CD8-positive, alpha-beta T cell (primary cell): ENCODE measurements at regions of chr3 and their contacts with region 1.

Region 1: DNA sequence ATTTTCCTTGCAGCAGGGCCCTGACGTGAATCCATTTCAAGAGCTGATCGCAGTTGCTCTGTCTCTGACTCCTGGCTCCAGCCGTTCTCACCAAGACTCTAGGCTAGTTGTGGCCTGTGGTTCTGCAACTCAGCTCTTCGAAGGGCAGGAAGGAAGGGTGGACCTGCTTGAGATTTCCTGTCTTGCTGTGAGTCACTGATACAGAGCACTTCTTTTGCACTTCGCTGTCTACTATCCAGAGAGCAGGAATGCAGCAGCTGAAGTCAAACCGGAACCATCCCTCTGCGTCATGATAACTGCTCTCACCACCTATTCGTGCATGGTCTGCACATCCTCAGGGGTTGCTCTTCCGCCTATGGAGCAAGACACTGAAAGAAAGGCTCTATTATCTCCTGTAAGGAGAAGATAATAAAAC is 59.7 kb downstream of the RAP2B start:
- DNase-seq: peak; percentile 62 to 96 (median 81)
- ATAC-seq: peak; percentile 93
- H3K4me3 ChIP-seq: peak overlapping the region; percentile 3 to 10
- H3K4me3 Mint-ChIP-seq: peak overlapping the region; percentile 67
- H3K27ac ChIP-seq: peak overlapping the region; percentile 64 to 96
- H3K27ac Mint-ChIP-seq: peak overlapping the region; percentile 94
- H3K4me1 ChIP-seq: peaks cover 68% of the 10 kb centered on the region
- H3K4me1 Mint-ChIP-seq: peaks cover 68% of the 10 kb centered on the region
- H3K27me3 ChIP-seq: no peaks in the 10 kb centered on the region
- H3K27me3 Mint-ChIP-seq: no peaks in the 10 kb centered on the region
- CTCF ChIP-seq: no peak

Region 2: GRCh38 chr3:153209596-153209995 is 12.2 kb before region 1 on chr3:
- CTCF ChIA-PET with region 1: interaction called, 17 read pairs
- POLR2A ChIA-PET with region 1: interaction called, 14 read pairs
- intact Hi-C with region 1: loop called in 1 of 2 experiments (anchors 1 kb)
- DNase-seq: peak in 1 of 9 experiments; percentile 43
- ATAC-seq: no peak
- H3K4me3 ChIP-seq: no peak overlapping the region
- H3K4me3 Mint-ChIP-seq: peak overlapping the region; percentile 50
- H3K27ac ChIP-seq: no peak overlapping the region
- H3K27ac Mint-ChIP-seq: no peak overlapping the region
- H3K4me1 ChIP-seq: peaks cover 13% of the 10 kb centered on the region
- H3K4me1 Mint-ChIP-seq: peaks cover 36% of the 10 kb centered on the region
- H3K27me3 ChIP-seq: no peaks in the 10 kb centered on the region
- H3K27me3 Mint-ChIP-seq: no peaks in the 10 kb centered on the region
- CTCF ChIP-seq: no peak

Region 3: GRCh38 chr3:153252963-153253362 is 31.2 kb after region 1 on chr3:
- CTCF ChIA-PET with region 1: no interaction called
- POLR2A ChIA-PET with region 1: interaction called, 3 read pairs
- intact Hi-C with region 1: loop called in 1 of 2 experiments (anchors 5 kb)
- DNase-seq: no peak
- ATAC-seq: no peak
- H3K4me3 ChIP-seq: no peak overlapping the region
- H3K4me3 Mint-ChIP-seq: no peak overlapping the region
- H3K27ac ChIP-seq: no peak overlapping the region
- H3K27ac Mint-ChIP-seq: no peak overlapping the region
- H3K4me1 ChIP-seq: peaks cover 10% of the 10 kb centered on the region
- H3K4me1 Mint-ChIP-seq: peaks cover 34% of the 10 kb centered on the region
- H3K27me3 ChIP-seq: no peaks in the 10 kb centered on the region
- H3K27me3 Mint-ChIP-seq: no peaks in the 10 kb centered on the region
- CTCF ChIP-seq: no peak

Region 4: GRCh38 chr3:153291056-153291685 is 69.4 kb after region 1 on chr3:
- CTCF ChIA-PET with region 1: interaction called, 15 read pairs
- POLR2A ChIA-PET with region 1: interaction called, 3 read pairs
- intact Hi-C with region 1: loop called in 1 of 2 experiments (anchors 2 kb)
- DNase-seq: peak in 2 of 9 experiments; percentile 44 to 57
- ATAC-seq: no peak
- H3K4me3 ChIP-seq: no peak overlapping the region
- H3K4me3 Mint-ChIP-seq: no peak overlapping the region
- H3K27ac ChIP-seq: no peak overlapping the region
- H3K27ac Mint-ChIP-seq: no peak overlapping the region
- H3K4me1 ChIP-seq: peaks cover 11% of the 10 kb centered on the region
- H3K4me1 Mint-ChIP-seq: peaks cover 38% of the 10 kb centered on the region
- H3K27me3 ChIP-seq: no peaks in the 10 kb centered on the region
- H3K27me3 Mint-ChIP-seq: no peaks in the 10 kb centered on the region
- CTCF ChIP-seq: no peak

Region 5: GRCh38 chr3:154323891-154324738 is 1102.4 kb after region 1 on chr3 and contains the start of gene DHX36:
- CTCF ChIA-PET with region 1: no interaction called
- POLR2A ChIA-PET with region 1: no interaction called
- intact Hi-C with region 1: loop called in 1 of 2 experiments (anchors 10 kb)
- DNase-seq: peak; percentile 85 to 97 (median 92)
- ATAC-seq: peak; percentile 81
- H3K4me3 ChIP-seq: peak within 1 kb of the TSS; percentile 64 to 76
- H3K4me3 Mint-ChIP-seq: peak within 1 kb of the TSS; percentile 96
- H3K27ac ChIP-seq: peak within 1 kb of the TSS; percentile 97
- H3K27ac Mint-ChIP-seq: peak within 1 kb of the TSS; percentile 99
- H3K4me1 ChIP-seq: peaks cover 45% of the 10 kb centered on the region
- H3K4me1 Mint-ChIP-seq: peaks cover 33% of the 10 kb centered on the region
- H3K27me3 ChIP-seq: no peaks in the 10 kb centered on the region
- H3K27me3 Mint-ChIP-seq: no peaks in the 10 kb centered on the region
- CTCF ChIP-seq: no peak
- total RNA-seq, gene DHX36: 149 to 152 TPM